ENCODE measurements at regions of chr19 and their contacts with region 1.

Region 1: DNA sequence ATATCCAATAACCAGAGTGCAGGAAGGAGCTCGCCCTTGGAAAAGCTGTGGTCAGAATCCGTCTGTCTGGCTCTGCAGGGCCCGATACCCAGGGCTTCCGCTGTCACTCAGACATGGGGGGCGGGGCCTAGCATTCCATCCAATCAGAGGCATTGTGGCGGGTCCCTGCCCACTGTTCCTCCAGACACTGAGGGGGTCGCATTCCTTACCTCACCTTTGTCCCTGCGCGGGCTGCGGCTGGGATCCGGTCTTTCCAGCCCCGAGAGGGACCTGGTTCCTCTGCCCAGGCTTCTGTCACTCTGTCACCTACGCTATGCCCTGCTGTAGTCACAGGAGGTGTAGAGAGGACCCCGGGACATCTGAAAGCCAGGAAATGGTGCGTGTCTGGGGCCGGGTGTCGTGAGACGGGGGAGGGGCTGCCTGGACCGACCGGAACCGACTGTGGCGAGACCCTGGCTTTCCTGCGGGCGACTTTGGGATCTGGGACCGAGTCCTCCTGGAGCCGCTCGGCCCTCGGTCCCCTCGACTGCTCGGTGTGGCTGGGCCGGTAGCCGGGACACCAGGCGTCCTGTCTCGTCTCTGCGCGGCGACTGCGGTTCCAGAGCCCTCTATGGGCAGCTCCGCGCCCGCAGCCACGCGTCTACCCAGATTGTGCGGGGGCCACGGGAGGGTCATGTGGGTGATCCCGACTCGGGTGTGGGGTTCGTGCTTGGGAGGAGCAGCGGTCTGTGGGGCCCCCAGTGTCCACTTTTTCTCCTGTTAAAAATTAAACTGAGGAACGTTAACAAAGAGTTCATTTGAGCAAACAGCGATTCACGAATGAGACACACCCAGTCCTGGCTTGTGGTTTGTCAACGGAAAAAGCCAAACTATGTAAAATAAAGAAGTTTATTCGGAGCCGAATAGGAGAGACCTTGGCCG is at the start of gene ZNF69:
- DNase-seq: peak; percentile 90 to 96 (median 94)
- ATAC-seq: peak; percentile 94
- H3K4me3 ChIP-seq: peak within 1 kb of the TSS; percentile 69 to 77
- H3K27ac ChIP-seq: peak within 1 kb of the TSS; percentile 77 to 96 (median 96)
- H3K4me1 ChIP-seq: peaks cover 31% of the 10 kb centered on the region
- H3K27me3 ChIP-seq: no peaks in the 10 kb centered on the region
- CTCF ChIP-seq: peak in 4 of 7 experiments; percentile 13 to 33 (median 32)
- POLR2A ChIP-seq: peak; percentile 83 to 96 (median 94)
- total RNA-seq, gene ZNF69: 13.2 to 14.8 TPM

Region 2: GRCh38 chr19:11987405-11988281 is 99.8 kb after region 1 on chr19:
- intact Hi-C with region 1: loop called (anchors 10 kb)
- DNase-seq: peak; percentile 95 to 98 (median 96)
- ATAC-seq: peak; percentile 98
- H3K4me3 ChIP-seq: peak overlapping the region; percentile 42 to 80
- H3K27ac ChIP-seq: peak overlapping the region; percentile 65 to 87 (median 83)
- H3K4me1 ChIP-seq: peaks cover 4% of the 10 kb centered on the region
- H3K27me3 ChIP-seq: no peaks in the 10 kb centered on the region
- CTCF ChIP-seq: no peak
- POLR2A ChIP-seq: peak; percentile 60 to 90 (median 89)

Region 3: DNA sequence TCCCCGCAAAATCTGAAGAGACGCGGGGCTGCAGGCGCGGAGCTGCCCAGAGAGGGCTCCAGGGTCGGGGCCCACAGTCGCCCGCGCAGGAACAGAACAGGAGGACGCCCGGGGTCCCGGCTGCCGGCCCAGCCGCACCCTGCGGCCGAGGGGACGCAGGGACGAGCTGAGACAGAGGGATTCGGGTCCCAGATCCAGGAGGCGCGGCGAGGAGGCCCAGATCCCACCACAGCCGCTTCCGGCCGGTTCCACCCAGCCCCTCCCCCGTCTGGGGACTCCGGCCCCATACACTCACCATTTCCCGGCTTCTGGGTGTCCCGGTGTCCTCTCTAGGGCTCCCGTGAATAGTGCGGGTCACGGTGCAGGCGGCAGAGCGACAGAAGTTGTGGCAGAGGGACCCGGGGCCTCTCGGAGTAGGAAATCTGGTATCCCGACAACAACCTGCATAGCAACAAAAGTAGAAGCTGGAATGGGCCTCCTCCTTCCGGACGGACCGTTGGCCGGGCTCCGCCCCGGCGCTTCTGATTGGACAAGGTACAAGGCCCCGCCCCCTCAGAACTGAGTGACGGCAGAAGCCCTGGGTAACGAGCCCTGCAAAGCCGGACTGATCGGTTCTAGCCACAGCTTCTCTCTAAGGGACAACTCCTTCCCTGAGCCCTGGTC is 252.1 kb after region 1 on chr19 and contains the start of gene ZNF20:
- intact Hi-C with region 1: loop called (anchors 10 kb)
- DNase-seq: peak; percentile 98 to 99 (median 98)
- ATAC-seq: peak; percentile 99
- H3K4me3 ChIP-seq: peak within 1 kb of the TSS; percentile 76 to 83
- H3K27ac ChIP-seq: peak within 1 kb of the TSS; percentile 66 to 84 (median 76)
- H3K4me1 ChIP-seq: peaks cover 20% of the 10 kb centered on the region
- H3K27me3 ChIP-seq: no peaks in the 10 kb centered on the region
- CTCF ChIP-seq: no peak
- POLR2A ChIP-seq: peak in 2 of 3 donors; percentile 60 to 74
- total RNA-seq, gene ZNF20: 0.66 to 4.9 TPM